ENCODE measurements at regions of chr13 and their contacts with region 1.

Region 1: GRCh38 chr13:20489185-20489820 is 36.4 kb downstream of the CRYL1 start:
- DNase-seq: peak; percentile 38
- H3K4me3 Mint-ChIP-seq: no peak overlapping the region
- H3K27ac Mint-ChIP-seq: no peak overlapping the region
- H3K4me1 Mint-ChIP-seq: peaks cover 2% of the 10 kb centered on the region
- H3K27me3 Mint-ChIP-seq: no peaks in the 10 kb centered on the region

Region 2: DNA sequence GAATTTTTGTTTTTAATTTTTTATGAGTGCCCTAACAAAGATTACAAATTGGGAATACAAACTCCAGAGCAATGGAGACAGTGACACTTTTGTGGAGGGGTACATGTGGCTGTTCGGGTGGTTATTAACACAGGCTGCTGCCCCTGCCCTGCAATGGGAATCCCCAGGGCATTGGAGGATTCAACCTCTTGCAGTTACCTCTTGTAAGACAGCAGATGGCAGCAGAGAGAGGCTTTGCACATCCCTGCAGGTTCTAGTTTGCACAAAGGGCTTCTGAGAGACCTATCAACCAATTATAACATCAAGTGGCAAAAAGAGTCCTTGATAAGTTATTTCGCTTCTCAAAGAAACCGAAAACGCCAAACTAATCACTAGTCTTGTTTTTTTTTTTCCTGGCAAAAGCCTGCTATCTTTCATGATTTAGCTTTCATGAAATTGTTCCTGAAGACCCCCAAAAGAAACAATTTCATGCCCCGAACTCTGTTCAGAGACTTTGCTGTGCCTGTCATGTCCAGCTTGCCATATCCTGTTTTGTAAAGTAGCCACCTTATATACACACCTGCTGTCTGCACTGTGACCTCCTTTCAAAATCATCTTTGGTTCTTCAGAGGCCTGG is 307.0 kb before region 1 on chr13:
- intact Hi-C with region 1: loop called (anchors 1 kb)
- DNase-seq: no peak
- H3K4me3 Mint-ChIP-seq: no peak overlapping the region
- H3K27ac Mint-ChIP-seq: no peak overlapping the region
- H3K4me1 Mint-ChIP-seq: no peaks in the 10 kb centered on the region
- H3K27me3 Mint-ChIP-seq: peaks cover 45% of the 10 kb centered on the region

Region 3: DNA sequence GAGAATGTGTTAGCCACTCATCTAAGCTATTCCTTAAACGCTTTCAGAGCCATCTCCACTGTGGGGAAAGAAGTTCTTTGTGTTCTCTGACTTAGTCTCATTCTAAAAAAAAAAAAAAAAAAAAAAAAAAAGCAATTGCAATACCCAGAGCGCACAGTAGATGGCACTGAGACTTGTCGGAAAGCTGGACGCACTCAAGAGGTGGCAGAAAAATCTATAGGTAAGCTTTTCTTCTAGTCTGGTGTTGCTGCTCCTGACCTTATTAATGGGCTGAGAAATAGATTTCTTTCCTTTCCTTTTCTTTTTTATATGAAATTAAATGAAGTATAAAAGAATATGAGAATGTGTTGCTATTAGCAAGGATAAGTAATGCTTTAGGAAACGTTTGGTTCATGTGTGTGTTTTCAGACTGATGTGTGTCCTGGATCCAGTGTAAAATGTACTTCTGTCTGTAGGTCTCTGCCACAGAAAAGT is 291.9 kb before region 1 on chr13:
- intact Hi-C with region 1: loop called (anchors 1 kb)
- DNase-seq: no peak
- H3K4me3 Mint-ChIP-seq: no peak overlapping the region
- H3K27ac Mint-ChIP-seq: no peak overlapping the region
- H3K4me1 Mint-ChIP-seq: peaks cover 17% of the 10 kb centered on the region
- H3K27me3 Mint-ChIP-seq: peaks cover 47% of the 10 kb centered on the region